Astrocyte of the cerebellum (primary cell): ENCODE measurements at regions of chr3 and their contacts with region 1.

Region 1: GRCh38 chr3:9373465-9373864 is 10.6 kb downstream of the THUMPD3 start:
- DNase-seq: no peak
- H3K4me3 ChIP-seq: no peak overlapping the region
- CTCF ChIP-seq: no peak

Region 2: GRCh38 chr3:9316881-9317361 is 56.5 kb before region 1 on chr3:
- in situ Hi-C with region 1: no loop called
- DNase-seq: peak; percentile 42
- H3K4me3 ChIP-seq: peak overlapping the region; percentile 14
- CTCF ChIP-seq: no peak

Region 3: GRCh38 chr3:9669720-9670432 is 296.4 kb after region 1 on chr3:
- in situ Hi-C with region 1: loop called (anchors 10 kb)
- DNase-seq: no peak
- H3K4me3 ChIP-seq: no peak overlapping the region
- CTCF ChIP-seq: no peak